ENCODE measurements at regions of chr18 and their contacts with region 1.

Region 1: GRCh38 chr18:71045331-71046065 is 756.7 kb downstream of the SOCS6 start:
- H3K4me3 Mint-ChIP-seq: no peak overlapping the region
- H3K27ac Mint-ChIP-seq: no peak overlapping the region
- H3K4me1 Mint-ChIP-seq: no peaks in the 10 kb centered on the region
- H3K27me3 Mint-ChIP-seq: no peaks in the 10 kb centered on the region

Region 2: GRCh38 chr18:70991577-70991976 is 53.9 kb before region 1 on chr18:
- intact Hi-C with region 1: loop called (anchors 2 kb)
- H3K4me3 Mint-ChIP-seq: no peak overlapping the region
- H3K27ac Mint-ChIP-seq: no peak overlapping the region
- H3K4me1 Mint-ChIP-seq: no peaks in the 10 kb centered on the region
- H3K27me3 Mint-ChIP-seq: no peaks in the 10 kb centered on the region

Region 3: DNA sequence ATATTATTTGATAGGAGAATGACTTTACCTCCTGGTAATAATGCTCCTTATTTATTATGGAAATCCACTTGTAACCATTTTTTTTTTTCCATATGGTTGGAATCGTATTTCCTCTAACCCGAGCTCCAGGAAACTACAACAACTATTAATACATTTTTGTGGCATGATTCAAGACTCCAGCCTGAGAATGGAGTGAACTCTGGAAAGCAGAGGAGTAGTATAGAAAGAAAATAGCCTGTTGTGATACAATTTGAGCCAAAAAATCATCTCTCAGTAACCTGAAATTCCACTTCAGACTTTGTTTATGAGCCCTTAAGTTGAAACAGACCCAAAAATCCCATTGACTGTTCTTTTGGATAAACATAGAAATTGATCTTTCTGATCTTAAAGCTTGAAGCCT is 164.4 kb after region 1 on chr18:
- intact Hi-C with region 1: no loop called
- H3K4me3 Mint-ChIP-seq: no peak overlapping the region
- H3K27ac Mint-ChIP-seq: no peak overlapping the region
- H3K4me1 Mint-ChIP-seq: no peaks in the 10 kb centered on the region
- H3K27me3 Mint-ChIP-seq: no peaks in the 10 kb centered on the region

Measured in dendritic cell treated with granulocyte-macrophage colony-stimulating factor and Interleukin-4, amounts not matched to agents 40 ng/mL and 50 ng/mL, for 4 days (primary cell).